Activated T-helper 1 cell treated with anti-CD3 and anti-CD28 coated beads, Interleukin-12 subunit alpha, Interleukin-12 subunit beta, Interleukin-2, Interleukin-4 antibody, amounts not matched to agents 30 ng/mL and 10 ng/mL and 1 ng/mL, durations not matched to agents 14 hours and 24 hours and 36 hours (primary cell): ENCODE measurements at regions of chr5 and their contacts with region 1.

Region 1: GRCh38 chr5:61534481-61535267 is 202.6 kb downstream of the ZSWIM6 start:
- DNase-seq: no peak
- H3K4me3 Mint-ChIP-seq: peak overlapping the region; percentile 25
- H3K27ac Mint-ChIP-seq: peak overlapping the region; percentile 69
- H3K4me1 Mint-ChIP-seq: peaks cover 16% of the 10 kb centered on the region
- H3K27me3 Mint-ChIP-seq: no peaks in the 10 kb centered on the region

Region 2: GRCh38 chr5:61202213-61202612 is 332.5 kb before region 1 on chr5:
- intact Hi-C with region 1: loop called (anchors 2 kb)
- DNase-seq: no peak
- H3K4me3 Mint-ChIP-seq: no peak overlapping the region
- H3K27ac Mint-ChIP-seq: peak overlapping the region; percentile 7
- H3K4me1 Mint-ChIP-seq: peaks cover 11% of the 10 kb centered on the region
- H3K27me3 Mint-ChIP-seq: peaks cover 5% of the 10 kb centered on the region

Region 3: GRCh38 chr5:61357745-61358144 is 176.9 kb before region 1 on chr5:
- intact Hi-C with region 1: no loop called
- DNase-seq: no peak
- H3K4me3 Mint-ChIP-seq: no peak overlapping the region
- H3K27ac Mint-ChIP-seq: no peak overlapping the region
- H3K4me1 Mint-ChIP-seq: peaks cover 4% of the 10 kb centered on the region
- H3K27me3 Mint-ChIP-seq: no peaks in the 10 kb centered on the region

Region 4: DNA sequence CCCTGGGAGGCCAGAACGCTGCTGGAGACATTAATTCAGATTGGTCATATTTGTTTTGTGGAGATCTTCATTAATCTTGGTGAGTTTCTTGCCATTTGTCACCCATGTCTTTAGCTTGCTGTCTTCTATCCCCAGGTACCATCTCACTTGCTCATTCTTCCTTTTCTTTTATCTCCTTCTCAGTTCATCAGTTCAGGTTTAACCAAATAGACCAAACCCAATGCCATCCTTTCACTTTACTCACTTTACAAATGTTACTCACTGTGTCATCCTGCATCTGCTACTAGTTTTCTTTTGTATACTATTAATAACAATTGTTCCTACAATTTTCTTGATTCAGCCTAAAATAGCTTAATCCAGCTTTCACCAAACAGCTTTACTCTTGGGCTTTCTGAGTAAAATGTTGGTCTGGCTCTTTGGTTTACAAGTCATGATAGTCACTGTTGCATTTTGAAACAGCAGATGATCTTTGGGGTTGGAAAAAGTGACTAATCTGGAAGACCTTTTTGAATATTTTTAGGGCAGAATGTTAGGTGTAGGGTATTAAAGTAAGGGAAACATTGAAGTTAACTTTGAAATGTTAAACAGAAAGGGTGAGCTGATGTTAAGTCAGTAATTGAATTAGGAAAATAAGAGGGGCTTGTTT is 44.3 kb after region 1 on chr5:
- intact Hi-C with region 1: loop called (anchors 1 kb)
- DNase-seq: no peak
- H3K4me3 Mint-ChIP-seq: no peak overlapping the region
- H3K27ac Mint-ChIP-seq: no peak overlapping the region
- H3K4me1 Mint-ChIP-seq: no peaks in the 10 kb centered on the region
- H3K27me3 Mint-ChIP-seq: peaks cover 7% of the 10 kb centered on the region

Region 5: DNA sequence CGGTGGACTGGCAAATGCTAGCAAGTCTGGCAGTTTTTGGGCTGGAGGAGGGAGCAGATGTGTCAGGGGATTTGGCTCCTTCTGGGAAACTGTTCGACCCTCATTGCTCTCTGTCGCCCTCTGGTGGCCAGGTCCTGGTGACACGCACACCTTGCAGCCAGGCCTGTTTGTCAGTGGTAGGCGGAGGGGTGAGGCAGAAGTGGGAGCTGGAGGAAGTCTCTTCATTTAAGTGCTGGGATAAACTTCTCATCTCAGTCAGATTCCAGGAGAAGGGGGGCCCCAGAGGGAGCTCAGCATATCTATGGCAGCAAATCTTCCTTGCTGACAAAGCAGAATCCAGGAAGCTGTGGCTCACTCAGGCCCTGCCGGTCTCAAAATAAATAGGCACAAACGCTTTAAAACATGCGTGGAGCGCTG is 123.9 kb after region 1 on chr5:
- intact Hi-C with region 1: loop called (anchors 10 kb)
- DNase-seq: peak; percentile 51
- H3K4me3 Mint-ChIP-seq: no peak overlapping the region
- H3K27ac Mint-ChIP-seq: no peak overlapping the region
- H3K4me1 Mint-ChIP-seq: no peaks in the 10 kb centered on the region
- H3K27me3 Mint-ChIP-seq: peaks cover 7% of the 10 kb centered on the region

Region 6: DNA sequence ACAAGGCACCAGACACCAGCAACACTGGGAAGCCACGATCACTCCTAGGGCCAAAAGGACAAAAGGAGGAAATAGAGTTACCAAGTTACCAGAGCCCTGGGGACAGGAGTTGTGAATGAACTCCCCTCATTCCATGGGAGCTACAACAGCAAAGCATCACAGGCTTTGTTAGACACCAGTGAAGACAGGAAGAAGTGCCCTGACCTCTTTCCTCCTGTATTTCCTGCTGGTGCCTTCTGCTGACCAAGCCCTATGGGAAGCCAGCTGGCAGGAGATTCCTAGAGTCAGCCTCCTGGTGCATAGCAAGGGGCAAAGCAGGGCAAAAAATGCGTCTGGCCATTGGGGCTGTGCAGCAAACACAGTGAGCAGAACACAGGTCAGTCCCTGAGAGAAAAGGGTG is 172.1 kb after region 1 on chr5:
- intact Hi-C with region 1: no loop called
- DNase-seq: no peak
- H3K4me3 Mint-ChIP-seq: no peak overlapping the region
- H3K27ac Mint-ChIP-seq: no peak overlapping the region
- H3K4me1 Mint-ChIP-seq: no peaks in the 10 kb centered on the region
- H3K27me3 Mint-ChIP-seq: no peaks in the 10 kb centered on the region

Region 7: DNA sequence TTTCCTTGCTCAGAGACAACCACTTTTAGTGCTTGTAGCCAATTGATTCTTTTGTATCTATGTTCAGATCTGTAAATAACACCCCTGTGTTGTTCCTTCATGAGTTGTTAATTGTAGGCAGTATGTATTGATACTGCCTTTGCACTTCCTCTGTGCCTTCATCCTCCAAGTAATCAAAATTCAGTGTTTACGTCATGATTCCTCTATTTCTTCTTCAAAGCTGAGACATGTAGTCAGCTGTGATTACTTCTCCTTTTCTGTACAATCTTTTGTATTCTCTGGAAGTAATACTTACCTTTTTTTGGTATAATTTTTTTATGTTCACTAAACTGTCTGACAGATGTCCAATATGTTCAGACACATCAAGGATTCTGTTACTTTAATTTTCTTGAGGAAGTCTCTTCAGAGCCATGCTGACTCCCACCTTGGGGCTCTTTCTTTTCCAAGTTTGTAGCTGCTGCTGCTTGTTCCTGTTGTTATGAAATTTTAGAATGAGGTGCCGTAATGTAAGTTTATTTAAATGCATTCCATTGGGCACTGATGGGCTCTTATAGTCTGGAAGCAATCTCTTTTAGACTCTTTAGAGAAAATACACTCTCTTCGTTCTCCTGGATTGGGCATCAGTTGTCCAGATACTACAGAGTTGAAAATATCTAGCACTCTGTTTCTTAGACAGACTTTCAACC is 1013.4 kb after region 1 on chr5:
- intact Hi-C with region 1: no loop called
- DNase-seq: no peak
- H3K4me3 Mint-ChIP-seq: no peak overlapping the region
- H3K27ac Mint-ChIP-seq: no peak overlapping the region
- H3K4me1 Mint-ChIP-seq: no peaks in the 10 kb centered on the region
- H3K27me3 Mint-ChIP-seq: no peaks in the 10 kb centered on the region